Activated CD4-positive, alpha-beta T cell treated with anti-CD3 and anti-CD28 coated beads, Interleukin-2, amount 10 ng/mL, durations not matched to agents 24 days and 14 days (primary cell): ENCODE measurements at regions of chr7 and their contacts with region 1.

Region 1: DNA sequence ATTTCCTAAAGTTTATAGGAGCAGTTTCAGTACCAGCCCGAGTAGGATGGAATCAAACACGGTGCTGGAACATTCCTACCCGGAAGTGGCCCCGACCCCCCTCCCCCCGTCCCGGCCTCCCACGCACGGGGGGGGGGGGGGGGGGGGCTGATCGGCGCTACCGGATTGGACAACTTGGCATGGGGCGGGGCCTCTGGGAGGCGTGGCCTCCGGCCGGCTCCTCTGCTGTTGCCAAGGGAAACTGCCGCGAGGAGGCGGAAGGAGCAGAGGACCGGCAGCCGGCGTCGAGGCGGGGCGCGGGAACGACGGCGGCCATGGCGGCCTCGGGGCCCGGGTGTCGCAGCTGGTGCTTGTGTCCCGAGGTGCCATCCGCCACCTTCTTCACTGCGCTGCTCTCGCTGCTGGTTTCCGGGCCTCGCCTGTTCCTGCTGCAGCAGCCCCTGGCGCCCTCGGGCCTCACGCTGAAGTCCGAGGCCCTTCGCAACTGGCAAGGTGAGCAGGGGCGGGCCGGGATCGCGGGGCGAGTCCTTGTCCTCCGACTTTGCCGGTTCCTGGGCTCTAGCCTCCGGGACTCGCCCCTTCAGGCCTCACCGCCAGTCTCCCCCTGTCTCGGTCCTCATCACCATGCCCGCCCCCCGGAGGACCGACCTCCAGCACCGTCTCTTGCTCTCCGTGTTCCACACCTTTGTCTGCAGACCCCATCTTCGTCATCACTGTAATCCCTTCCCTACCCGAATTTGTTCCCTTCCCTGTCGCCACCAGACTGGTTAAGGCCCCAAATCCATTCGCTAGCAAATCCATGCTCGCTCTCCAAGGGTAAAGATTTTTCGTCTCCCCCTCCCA is at the start of gene RHBDD2:
- DNase-seq: peak; percentile 98
- H3K4me3 Mint-ChIP-seq: peak within 1 kb of the TSS; percentile 100
- H3K27ac Mint-ChIP-seq: peak within 1 kb of the TSS; percentile 93
- H3K4me1 Mint-ChIP-seq: peaks cover 32% of the 10 kb centered on the region
- H3K27me3 Mint-ChIP-seq: no peaks in the 10 kb centered on the region
- total RNA-seq, gene RHBDD2: 48.4 and 49.2 TPM in 2 replicates

Region 2: DNA sequence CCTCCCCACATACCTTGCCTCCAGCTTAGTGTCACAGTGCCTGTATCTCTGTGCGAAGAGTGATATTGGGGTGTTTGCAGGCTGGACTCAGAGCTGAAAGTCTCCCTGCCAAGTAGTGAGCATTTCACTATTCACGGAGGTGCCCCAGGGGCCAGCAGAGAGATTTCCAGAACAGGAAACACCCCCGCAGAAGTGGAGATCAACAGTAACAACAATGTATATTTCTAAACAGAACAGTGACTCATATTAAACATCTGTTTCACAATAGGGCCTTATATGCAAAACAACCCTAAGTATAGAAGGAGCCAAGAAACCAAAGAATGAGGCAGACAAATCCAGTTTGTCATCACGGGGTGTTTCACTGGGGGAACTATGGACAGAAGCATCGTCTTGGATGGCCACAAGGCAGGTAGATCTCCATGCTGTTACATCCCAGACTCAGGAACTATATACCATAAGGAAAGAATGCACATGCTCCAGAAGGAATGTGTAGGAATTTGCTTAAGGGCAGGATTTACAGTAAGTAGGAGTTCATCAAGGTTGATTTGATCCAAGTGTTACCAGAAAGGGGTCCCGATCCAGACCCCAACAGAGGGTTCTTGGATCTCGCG is 36.0 kb before region 1 on chr7:
- intact Hi-C with region 1: loop called (anchors 1 kb)
- DNase-seq: peak; percentile 70
- H3K4me3 Mint-ChIP-seq: peak overlapping the region; percentile 66
- H3K27ac Mint-ChIP-seq: peak overlapping the region; percentile 95
- H3K4me1 Mint-ChIP-seq: peaks cover 18% of the 10 kb centered on the region
- H3K27me3 Mint-ChIP-seq: no peaks in the 10 kb centered on the region

Region 3: DNA sequence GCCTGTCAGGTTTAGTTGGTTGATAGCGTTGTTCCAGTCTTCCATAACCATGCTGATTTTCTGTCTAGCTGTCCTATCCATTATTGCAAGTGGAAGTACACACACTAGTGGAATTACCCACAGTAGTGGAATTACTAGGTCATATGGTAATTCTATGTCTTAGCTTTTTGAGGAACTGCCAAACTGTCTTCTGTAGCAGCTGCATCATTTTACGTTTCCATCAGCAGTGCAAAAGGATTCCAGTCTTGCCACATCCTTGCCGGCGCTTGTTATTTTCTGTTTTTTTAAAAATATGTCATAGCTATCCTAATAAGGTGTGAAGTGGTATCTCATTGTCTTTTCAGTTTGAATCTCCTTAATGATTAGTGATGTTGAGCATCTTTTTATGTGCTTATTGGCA is 17.4 kb before region 1 on chr7:
- intact Hi-C with region 1: no loop called
- DNase-seq: no peak
- H3K4me3 Mint-ChIP-seq: no peak overlapping the region
- H3K27ac Mint-ChIP-seq: no peak overlapping the region
- H3K4me1 Mint-ChIP-seq: peaks cover 10% of the 10 kb centered on the region
- H3K27me3 Mint-ChIP-seq: peaks cover 13% of the 10 kb centered on the region

Region 4: DNA sequence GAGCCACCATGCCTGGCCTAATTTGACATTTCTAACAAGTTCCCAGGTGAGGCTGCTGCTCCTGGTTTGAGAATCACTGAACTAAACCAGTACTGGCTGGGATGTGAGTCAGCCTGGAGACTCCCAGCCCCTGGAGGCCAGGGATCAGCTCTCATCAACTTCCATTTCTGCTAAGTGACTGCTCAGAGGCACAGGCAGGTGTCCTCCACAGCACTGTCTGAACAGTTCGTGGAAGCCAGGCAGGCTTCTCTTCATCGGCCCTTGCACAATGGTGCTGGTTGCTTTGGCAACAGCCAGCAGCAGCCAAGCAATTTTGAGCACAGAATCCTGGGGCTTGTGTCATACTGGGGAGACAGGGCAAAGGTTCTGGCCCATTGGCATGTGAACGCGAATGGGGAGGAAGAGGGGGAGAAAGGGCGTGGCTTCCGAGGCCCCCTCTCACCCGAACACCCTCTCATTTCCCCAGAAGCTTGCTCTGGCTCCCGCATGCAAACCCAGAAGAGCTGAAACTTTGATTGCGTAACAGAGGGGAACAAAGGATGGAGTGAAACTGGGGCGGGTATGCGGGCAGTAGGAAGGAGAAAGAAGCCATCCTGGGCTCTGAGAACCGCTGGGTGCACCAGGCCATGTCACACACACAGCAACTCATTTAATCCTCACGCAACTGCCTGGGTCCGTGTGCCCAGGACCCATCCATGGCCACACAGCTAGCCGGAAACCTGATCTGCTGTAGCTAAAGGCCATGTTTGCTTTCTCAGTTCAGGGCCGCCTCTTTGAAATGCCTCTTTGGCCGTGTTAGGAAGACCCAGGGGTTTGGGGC is 27.0 kb after region 1 on chr7:
- intact Hi-C with region 1: loop called (anchors 2 kb)
- DNase-seq: no peak
- H3K4me3 Mint-ChIP-seq: no peak overlapping the region
- H3K27ac Mint-ChIP-seq: no peak overlapping the region
- H3K4me1 Mint-ChIP-seq: peaks cover 5% of the 10 kb centered on the region
- H3K27me3 Mint-ChIP-seq: peaks cover 5% of the 10 kb centered on the region

Region 5: DNA sequence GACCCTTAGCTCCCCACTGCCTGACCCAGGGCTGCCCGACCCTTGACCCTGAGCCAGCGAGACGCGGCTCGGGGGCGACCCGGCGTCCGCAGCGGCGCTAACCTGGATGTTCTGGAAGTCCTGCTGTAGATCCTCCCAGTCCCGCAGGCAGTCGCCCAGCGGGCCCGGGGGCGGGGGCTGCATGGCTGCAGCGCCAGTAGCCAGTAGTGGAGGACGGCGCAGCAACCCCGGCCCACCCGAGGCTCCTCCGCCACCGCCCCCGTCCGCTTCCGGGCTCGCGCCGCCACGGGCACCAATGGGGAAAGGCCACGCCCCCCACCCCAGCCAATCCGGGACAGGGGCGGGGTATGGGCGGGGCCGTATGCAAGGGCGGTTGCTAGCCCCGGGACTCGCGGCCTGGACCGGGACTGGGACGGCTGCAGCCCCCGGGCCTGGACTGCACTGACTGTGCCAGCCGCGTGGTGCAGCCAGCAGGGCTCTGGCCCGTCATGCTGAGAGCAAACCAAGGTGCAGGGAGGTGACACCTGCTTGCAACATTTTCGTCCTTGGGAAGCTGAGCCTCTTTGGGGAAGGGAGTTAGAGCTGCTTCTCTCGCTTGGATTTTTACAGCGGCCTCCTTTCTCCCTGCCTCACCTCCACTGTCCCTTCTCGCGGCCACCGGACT is 115.5 kb after region 1 on chr7 and contains the start of gene TMEM120A:
- intact Hi-C with region 1: loop called (anchors 5 kb)
- DNase-seq: peak; percentile 99
- H3K4me3 Mint-ChIP-seq: peak within 1 kb of the TSS; percentile 81
- H3K27ac Mint-ChIP-seq: peak within 1 kb of the TSS; percentile 41
- H3K4me1 Mint-ChIP-seq: peaks cover 36% of the 10 kb centered on the region
- H3K27me3 Mint-ChIP-seq: no peaks in the 10 kb centered on the region
- total RNA-seq, gene TMEM120A: 36.1 and 38.2 TPM in 2 replicates

Region 6: GRCh38 chr7:76047811-76048667 is 169.0 kb after region 1 on chr7 and contains the starts of genes MDH2 and STYXL1:
- intact Hi-C with region 1: loop called (anchors 5 kb)
- DNase-seq: peak; percentile 98
- H3K4me3 Mint-ChIP-seq: peak within 1 kb of the TSS; percentile 97
- H3K27ac Mint-ChIP-seq: peak within 1 kb of the TSS; percentile 96
- H3K4me1 Mint-ChIP-seq: peaks cover 39% of the 10 kb centered on the region
- H3K27me3 Mint-ChIP-seq: no peaks in the 10 kb centered on the region
- total RNA-seq, gene MDH2: 291 and 293 TPM in 2 replicates
- total RNA-seq, gene STYXL1: 30.9 and 33.6 TPM in 2 replicates